Psoas muscle (tissue), 8 donors: ENCODE measurements at regions of chr4 and their contacts with region 1.

Region 1: GRCh38 chr4:82918091-82918490 is 17.6 kb downstream of the THAP9 start:
- DNase-seq: no peak
- ATAC-seq: no peak
- H3K4me3 ChIP-seq: no peak overlapping the region
- H3K27ac ChIP-seq: no peak overlapping the region
- H3K4me1 ChIP-seq: no peaks in the 10 kb centered on the region
- H3K27me3 ChIP-seq: no peaks in the 10 kb centered on the region
- CTCF ChIP-seq: no peak

Region 2: DNA sequence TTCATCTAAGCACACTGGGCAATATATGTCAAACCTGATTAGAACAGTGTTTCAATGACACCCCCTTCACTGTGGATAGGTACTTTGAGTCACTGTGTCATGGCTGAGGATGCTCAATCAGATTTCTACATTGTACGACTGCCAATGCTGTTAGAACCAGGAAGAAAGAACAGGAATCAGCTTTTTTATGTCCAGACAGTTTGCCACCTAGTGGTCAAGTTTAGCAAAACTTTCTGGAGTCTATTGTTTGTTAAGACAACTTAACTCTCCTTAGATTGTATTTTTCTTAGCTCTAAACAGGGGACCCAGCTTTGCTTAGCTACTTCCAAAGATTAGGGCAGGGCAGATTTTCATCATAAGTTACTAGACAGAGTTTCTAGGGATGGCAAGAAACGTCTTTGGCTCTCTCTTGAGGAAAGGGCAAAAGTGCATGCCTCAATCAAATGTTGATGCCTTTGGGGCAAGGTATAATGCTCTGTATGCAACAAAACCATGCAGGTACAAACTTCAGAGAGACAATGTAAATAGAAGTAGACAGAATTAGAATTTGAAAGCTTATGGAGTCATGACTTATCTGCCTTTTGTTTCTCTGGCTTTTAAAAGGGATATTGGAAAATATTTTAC is 1928.1 kb before region 1 on chr4:
- intact Hi-C with region 1: loop called in 1 of 2 experiments (anchors 5 kb)
- DNase-seq: no peak
- ATAC-seq: peak in 1 of 4 donors; percentile 42
- H3K4me3 ChIP-seq: no peak overlapping the region
- H3K27ac ChIP-seq: no peak overlapping the region
- H3K4me1 ChIP-seq: no peaks in the 10 kb centered on the region
- H3K27me3 ChIP-seq: no peaks in the 10 kb centered on the region
- CTCF ChIP-seq: peak; percentile 70